Transverse colon (tissue), 4 donors: ENCODE measurements at regions of chr22 and their contacts with region 1.

Region 1: GRCh38 chr22:48567213-48567975 is 1260.3 kb downstream of the BRD1 start:
- DNase-seq: no peak
- H3K4me3 ChIP-seq: no peak overlapping the region
- H3K27ac ChIP-seq: no peak overlapping the region
- H3K4me1 ChIP-seq: no peaks in the 10 kb centered on the region
- H3K27me3 ChIP-seq: no peaks in the 10 kb centered on the region
- CTCF ChIP-seq: no peak
- EP300 ChIP-seq: no peak
- POLR2A ChIP-seq: no peak

Region 2: DNA sequence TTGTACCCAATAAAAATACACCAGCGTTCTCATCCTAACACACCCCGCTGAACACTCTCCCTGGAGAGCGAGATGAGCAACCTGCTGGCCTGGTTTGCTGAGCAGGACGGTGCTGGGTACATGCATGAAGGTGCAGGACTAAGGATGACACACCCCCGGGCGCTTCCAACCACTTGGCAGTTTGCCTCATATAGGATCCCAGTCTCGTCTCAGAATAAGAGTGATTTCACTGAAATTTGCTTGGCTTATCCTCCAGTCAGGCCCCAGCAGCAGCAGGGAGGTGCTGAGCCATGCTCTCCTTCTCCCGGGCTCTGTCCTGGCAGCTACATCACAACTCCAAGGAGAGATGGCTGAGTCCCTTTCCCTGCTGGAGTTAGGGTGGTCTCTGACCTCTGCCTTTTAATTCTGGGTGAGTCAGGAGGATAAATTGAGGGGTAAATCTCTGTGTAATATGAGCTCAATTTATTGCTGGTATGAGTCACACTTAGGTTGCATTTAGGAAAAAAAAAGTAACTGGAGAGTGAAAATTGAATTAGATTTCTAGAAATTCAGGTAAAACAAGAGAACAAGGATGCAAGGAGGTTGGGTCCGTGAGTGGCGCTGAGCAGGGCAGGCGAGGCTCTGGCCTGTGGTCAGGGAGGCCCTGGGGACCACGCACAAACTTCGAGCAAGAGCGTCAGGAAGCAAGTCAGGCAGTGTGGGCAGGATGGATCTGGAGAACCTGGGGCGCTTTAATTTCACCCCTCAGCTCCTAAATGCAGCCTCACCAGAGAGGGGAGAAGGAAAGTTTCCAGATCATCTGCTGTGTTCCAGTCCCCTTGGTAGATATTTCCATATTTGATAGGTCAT is 831.0 kb before region 1 on chr22:
- in situ Hi-C with region 1: no loop called
- intact Hi-C with region 1: loop called (anchors 10 kb)
- DNase-seq: no peak
- H3K4me3 ChIP-seq: no peak overlapping the region
- H3K27ac ChIP-seq: no peak overlapping the region
- H3K4me1 ChIP-seq: no peaks in the 10 kb centered on the region
- H3K27me3 ChIP-seq: no peaks in the 10 kb centered on the region
- CTCF ChIP-seq: no peak
- EP300 ChIP-seq: no peak
- POLR2A ChIP-seq: no peak

Region 3: DNA sequence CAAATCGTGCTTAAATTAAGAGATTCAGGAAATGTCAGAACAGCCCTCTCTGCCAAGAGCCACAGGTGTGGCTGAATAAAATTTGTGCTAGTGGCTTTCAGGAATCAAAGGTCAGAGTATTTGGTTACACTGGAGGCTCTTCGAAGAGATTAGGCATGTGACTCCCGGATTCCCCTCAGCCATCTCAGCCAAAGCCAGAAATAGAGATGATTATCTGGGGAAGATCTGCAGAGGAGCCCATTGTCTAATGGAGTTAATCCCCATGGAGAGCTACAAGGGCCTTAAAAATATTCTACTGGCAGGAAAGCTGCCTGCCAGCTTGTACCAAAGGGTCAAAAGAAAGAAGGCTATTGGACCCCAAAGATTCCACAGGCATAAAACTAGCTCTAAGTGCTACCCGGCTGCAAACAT is 545.4 kb before region 1 on chr22:
- in situ Hi-C with region 1: no loop called
- intact Hi-C with region 1: no loop called
- DNase-seq: no peak
- H3K4me3 ChIP-seq: no peak overlapping the region
- H3K27ac ChIP-seq: no peak overlapping the region
- H3K4me1 ChIP-seq: no peaks in the 10 kb centered on the region
- H3K27me3 ChIP-seq: no peaks in the 10 kb centered on the region
- CTCF ChIP-seq: no peak
- EP300 ChIP-seq: no peak
- POLR2A ChIP-seq: no peak

Region 4: DNA sequence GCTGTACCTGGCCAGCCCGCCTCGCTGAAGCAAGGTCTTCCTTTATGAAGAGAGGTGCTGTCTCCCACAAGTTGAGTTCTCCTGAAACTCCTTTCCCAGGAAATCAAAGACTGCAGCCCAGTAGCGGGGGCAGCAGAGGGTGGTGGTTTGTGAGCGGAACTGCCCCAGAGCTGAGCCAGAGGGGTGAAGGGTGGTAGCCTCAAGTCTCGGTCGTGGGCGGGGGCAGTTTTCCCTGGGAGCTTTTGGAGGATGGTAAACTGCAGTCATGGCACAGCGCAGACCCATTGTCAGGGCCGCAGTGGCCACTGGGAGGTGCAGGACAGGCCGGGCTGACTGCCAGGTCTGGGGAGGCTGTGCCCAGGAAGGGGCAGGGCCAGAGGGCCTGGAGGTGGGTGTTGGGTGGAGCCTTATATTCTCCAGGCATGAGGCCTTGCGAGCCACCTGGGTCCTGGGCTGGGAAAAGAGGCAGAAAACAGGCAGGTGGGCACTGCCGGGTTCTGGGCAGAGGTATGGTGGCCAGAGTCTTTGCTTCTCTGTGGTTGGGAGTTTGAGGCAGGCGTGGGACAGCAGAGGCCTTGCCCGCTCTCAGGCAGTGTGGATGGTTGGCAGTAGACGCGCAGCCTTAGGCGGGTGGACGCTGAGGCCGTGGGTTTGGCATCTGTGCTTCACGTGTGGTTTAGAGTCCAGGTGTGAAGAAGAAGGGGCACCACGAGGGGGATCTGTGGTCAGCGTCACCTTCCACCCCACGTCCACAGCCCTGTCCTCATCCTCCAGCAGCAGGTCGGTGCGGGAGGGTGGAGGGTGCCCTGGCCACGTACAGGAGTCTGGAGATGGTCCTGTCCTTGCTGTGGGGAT is 83.9 kb after region 1 on chr22:
- in situ Hi-C with region 1: no loop called
- intact Hi-C with region 1: no loop called
- DNase-seq: no peak
- H3K4me3 ChIP-seq: no peak overlapping the region
- H3K27ac ChIP-seq: no peak overlapping the region
- H3K4me1 ChIP-seq: no peaks in the 10 kb centered on the region
- H3K27me3 ChIP-seq: no peaks in the 10 kb centered on the region
- CTCF ChIP-seq: no peak
- EP300 ChIP-seq: no peak
- POLR2A ChIP-seq: no peak